Activated naive CD4-positive, alpha-beta T cell treated with anti-CD3 and anti-CD28 coated beads for 36 hours (primary cell): ENCODE measurements at regions of chr14 and their contacts with region 1.

Region 1: GRCh38 chr14:54902521-54903420 is at the start of gene GCH1:
- DNase-seq: peak; percentile 72
- H3K4me3 Mint-ChIP-seq: peak within 1 kb of the TSS; percentile 86
- H3K27ac Mint-ChIP-seq: peak within 1 kb of the TSS; percentile 88
- H3K4me1 Mint-ChIP-seq: peaks cover 20% of the 10 kb centered on the region
- H3K27me3 Mint-ChIP-seq: no peaks in the 10 kb centered on the region
- total RNA-seq, gene GCH1: 56.8 to 57.3 TPM

Region 2: GRCh38 chr14:53842938-53843337 is 1059.8 kb before region 1 on chr14:
- CTCF ChIA-PET with region 1: no interaction called
- intact Hi-C with region 1: no loop called
- DNase-seq: no peak
- H3K4me3 Mint-ChIP-seq: no peak overlapping the region
- H3K27ac Mint-ChIP-seq: no peak overlapping the region
- H3K4me1 Mint-ChIP-seq: no peaks in the 10 kb centered on the region
- H3K27me3 Mint-ChIP-seq: peaks cover 3% of the 10 kb centered on the region

Region 3: DNA sequence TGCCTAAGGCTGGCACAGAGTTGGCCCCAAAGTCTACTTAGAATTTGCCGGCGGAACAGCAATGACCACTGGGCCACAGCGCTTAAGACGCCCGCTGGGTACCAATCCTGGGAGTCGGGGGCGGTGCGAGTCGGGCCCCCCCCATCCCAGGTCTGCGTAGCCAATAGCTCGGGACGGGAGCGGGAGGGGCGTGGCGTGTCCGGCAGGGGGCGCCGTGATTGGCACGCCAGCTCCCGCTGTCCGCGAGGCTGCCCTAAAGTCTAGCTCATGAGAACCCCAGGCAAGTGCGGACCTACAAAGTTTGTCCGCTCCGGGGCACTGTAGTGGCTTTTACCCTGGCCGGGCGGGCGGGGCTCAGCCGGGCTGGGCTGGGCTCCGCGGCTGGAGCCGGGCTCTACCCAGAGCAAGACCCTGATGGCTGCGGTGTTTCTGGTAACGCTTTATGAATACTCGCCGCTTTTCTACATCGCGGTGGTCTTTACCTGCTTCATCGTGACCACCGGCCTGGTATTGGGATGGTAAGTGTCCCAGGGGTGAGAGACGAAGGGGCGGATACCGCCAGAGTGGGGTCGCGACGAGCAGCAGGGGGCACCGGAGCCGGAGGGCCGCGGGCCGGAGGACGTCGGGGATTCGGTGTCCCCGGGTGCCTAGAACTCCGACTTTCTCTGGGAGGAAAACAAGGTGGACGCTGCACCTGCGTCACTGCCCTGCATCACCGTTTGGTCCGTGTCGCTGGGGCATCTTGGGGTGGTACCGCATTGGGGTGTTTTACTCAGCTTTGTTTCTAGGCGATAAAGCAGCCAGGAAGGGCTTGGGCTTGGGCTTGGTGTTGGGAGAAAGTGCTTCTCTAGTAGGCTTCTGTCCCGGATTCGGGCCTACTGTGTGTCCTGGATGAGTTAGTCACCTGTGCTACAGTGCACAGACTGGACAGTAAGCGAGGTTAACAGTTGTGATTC is 392.9 kb before region 1 on chr14 and contains the start of gene CGRRF1:
- CTCF ChIA-PET with region 1: no interaction called
- intact Hi-C with region 1: loop called (anchors 5 kb)
- DNase-seq: peak; percentile 98
- H3K4me3 Mint-ChIP-seq: peak within 1 kb of the TSS; percentile 86
- H3K27ac Mint-ChIP-seq: peak within 1 kb of the TSS; percentile 52
- H3K4me1 Mint-ChIP-seq: peaks cover 41% of the 10 kb centered on the region
- H3K27me3 Mint-ChIP-seq: no peaks in the 10 kb centered on the region
- total RNA-seq, gene CGRRF1: 9.2 to 9.7 TPM

Region 4: DNA sequence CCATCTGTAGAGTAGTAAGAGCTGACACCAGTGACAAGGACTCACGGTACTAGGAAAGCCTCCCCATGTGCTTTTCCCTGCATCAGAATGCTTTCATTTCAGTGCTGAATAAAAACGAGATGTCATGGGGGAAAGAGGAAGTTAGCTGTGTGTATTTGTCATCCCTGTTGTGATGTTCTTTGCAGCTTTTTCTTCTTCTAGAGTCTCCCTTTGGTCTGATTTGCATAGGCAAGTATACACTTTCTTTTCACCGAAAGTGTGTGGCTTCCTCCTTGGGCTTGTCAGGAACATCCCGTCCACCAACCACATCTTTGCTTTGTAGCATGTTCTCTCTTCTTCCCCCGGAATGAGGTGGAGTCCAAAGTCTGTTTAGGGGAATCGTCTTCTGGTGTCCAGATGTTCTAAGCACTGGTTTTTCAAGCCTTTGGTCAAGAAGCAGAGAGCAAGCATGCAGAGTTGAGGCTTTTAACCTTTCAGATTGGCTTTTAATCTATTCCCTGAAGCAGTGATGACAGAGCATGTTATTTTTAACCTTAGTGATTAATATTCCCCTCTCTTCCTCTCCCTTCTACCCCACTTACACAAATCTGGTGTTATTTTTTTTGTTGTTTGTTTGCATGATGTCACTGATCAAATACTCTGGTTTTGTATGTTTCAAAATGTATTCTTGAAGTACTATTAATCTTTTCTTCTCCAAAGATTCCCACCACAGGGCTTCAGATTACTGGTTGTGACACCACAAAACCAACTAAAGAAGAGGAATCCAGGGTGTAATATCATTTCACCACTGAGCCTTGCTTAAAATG is 172.4 kb before region 1 on chr14:
- CTCF ChIA-PET with region 1: no interaction called
- intact Hi-C with region 1: loop called (anchors 1 kb)
- DNase-seq: peak; percentile 74
- H3K4me3 Mint-ChIP-seq: peak overlapping the region; percentile 58
- H3K27ac Mint-ChIP-seq: peak overlapping the region; percentile 96
- H3K4me1 Mint-ChIP-seq: peaks cover 33% of the 10 kb centered on the region
- H3K27me3 Mint-ChIP-seq: peaks cover 3% of the 10 kb centered on the region

Region 5: DNA sequence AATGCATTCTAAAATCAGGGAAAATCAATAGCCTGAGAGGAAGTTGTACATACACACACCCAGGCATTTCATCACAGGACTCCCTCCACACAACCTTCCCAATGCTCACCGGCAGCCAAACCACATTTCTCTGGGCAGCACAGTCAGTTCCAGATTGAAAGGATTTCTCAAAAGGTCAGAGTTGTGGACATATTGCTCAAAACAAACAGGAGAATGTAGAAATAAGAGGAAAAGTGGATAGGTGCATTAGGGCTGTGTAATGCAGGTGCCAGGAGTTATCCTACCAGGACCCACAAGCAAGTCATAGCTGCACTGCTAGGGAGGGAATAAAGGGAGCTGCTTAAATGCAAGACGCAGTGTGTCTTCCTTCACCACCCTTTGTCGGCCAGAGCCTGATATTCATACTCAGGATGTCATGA is 63.1 kb before region 1 on chr14:
- CTCF ChIA-PET with region 1: interaction called, 4 read pairs
- intact Hi-C with region 1: loop called (anchors 2 kb)
- DNase-seq: no peak
- H3K4me3 Mint-ChIP-seq: no peak overlapping the region
- H3K27ac Mint-ChIP-seq: peak overlapping the region; percentile 31
- H3K4me1 Mint-ChIP-seq: no peaks in the 10 kb centered on the region
- H3K27me3 Mint-ChIP-seq: no peaks in the 10 kb centered on the region

Region 6: GRCh38 chr14:55026793-55027561 is 124.2 kb after region 1 on chr14 and contains the starts of genes SOCS4 and WDHD1:
- CTCF ChIA-PET with region 1: no interaction called
- intact Hi-C with region 1: loop called (anchors 2 kb)
- DNase-seq: peak; percentile 97
- H3K4me3 Mint-ChIP-seq: peak within 1 kb of the TSS; percentile 96
- H3K27ac Mint-ChIP-seq: peak within 1 kb of the TSS; percentile 92
- H3K4me1 Mint-ChIP-seq: peaks cover 46% of the 10 kb centered on the region
- H3K27me3 Mint-ChIP-seq: no peaks in the 10 kb centered on the region
- total RNA-seq, gene SOCS4: 17.7 to 17.9 TPM
- total RNA-seq, gene WDHD1: 61.1 to 62.9 TPM

Region 7: DNA sequence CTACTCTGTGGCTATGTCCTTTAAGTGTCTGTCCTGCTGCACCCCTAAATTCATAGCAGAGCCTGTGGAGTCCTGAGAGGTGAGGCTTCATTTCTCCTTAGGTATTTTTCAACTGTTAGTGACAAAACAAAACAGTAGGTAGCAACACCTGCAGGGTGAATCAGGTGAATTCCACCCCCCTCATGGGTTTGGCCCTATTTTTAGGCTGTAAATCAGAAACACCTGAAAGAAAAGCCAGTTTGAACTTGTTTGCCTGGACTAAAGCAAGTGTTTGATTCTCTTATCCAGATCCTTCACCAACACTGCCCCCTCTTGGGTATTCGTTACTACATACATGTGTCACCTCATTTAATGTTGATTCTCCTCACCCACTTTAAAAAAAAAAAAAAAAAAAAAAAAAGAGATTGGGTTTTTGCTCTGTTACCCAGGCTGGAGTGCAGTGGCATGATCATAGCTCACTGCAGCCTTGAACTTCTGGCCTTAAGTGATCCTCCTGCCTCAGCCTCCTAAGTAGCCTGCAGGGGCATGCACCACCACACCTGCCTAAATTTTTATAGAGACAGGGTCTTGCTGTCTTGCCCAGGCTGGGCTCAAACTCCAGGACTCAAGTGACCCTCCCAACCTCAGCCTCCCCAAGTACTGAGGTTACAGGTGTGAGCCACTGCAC is 527.4 kb after region 1 on chr14:
- CTCF ChIA-PET with region 1: no interaction called
- intact Hi-C with region 1: loop called (anchors 1 kb)
- DNase-seq: peak; percentile 71
- H3K4me3 Mint-ChIP-seq: no peak overlapping the region
- H3K27ac Mint-ChIP-seq: peak overlapping the region; percentile 62
- H3K4me1 Mint-ChIP-seq: peaks cover 29% of the 10 kb centered on the region
- H3K27me3 Mint-ChIP-seq: no peaks in the 10 kb centered on the region